GM13977 (cell line): ENCODE measurements at regions of chr10 and their contacts with region 1.

Region 1: DNA sequence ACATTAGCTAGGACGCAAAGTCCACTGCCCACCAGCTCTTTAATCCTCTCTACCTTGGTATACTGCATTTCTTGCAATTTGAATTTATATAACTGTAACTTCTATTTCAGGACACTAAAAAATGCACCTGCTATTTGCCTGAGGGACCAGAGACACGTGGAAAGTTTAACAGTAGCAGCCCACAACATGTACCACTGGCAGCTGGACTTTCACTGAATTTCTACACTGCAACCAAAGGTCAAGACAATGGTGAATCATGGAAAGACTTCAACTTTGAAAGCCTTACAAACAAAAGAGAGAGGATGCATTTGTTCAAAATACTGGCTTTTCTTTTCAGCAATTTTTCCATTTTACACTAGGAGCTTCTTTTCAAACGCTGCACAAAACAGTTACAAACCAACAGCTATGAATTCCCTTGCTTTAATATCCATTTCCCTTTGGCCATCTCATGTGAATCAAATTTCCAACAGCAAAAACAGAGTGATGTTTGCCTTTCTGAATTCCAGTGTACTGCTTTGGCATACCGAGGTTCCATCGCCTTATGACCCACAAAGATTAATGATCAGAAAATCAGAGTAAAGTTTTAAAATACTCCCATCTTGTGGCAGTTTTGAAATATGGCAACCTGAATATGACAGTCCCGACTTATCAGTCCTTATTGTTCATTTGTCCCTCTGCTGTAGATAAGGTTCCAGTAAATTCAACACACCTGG is 29.9 kb upstream of the HNRNPH3 start:
- DNase-seq: peak; percentile 42
- CTCF ChIP-seq: peak; percentile 51

Region 2: GRCh38 chr10:67849331-67850011 is 452.5 kb before region 1 on chr10:
- in situ Hi-C with region 1: loop called (anchors 25 kb)
- DNase-seq: peak; percentile 87
- CTCF ChIP-seq: peak; percentile 5

Region 3: GRCh38 chr10:68212721-68213352 is 89.1 kb before region 1 on chr10:
- in situ Hi-C with region 1: loop called (anchors 10 kb)
- DNase-seq: peak; percentile 36
- CTCF ChIP-seq: peak; percentile 55

Region 4: GRCh38 chr10:68492118-68492517 is 190.2 kb after region 1 on chr10:
- in situ Hi-C with region 1: no loop called
- DNase-seq: no peak
- CTCF ChIP-seq: no peak